ENCODE measurements at regions of chr4 and their contacts with region 1.

Region 1: GRCh38 chr4:46329118-46329976 is 60.6 kb downstream of the GABRA2 start:
- DNase-seq: peak; percentile 33
- H3K4me3 ChIP-seq: no peak overlapping the region
- H3K27ac ChIP-seq: no peak overlapping the region
- H3K4me1 ChIP-seq: no peaks in the 10 kb centered on the region
- H3K27me3 ChIP-seq: no peaks in the 10 kb centered on the region
- CTCF ChIP-seq: peak; percentile 42

Region 2: DNA sequence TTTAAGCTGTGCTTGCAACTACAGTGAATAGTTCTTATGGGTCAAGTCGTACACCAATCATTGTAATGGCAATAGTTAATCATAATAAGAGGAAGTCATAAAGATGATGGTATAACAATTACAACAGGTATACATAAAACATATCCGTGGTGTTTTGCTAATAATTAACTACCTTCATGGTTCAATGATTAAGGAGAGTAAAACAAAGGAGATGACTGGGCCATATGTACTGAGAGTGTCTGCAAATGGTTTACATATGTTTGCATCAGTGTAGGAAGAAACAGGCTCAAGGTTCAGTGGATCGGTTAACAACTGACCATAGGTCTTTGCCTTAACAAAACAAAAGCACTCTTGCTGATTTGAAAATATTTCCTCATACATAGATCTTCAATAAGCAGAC is 326.7 kb after region 1 on chr4:
- intact Hi-C with region 1: loop called (anchors 10 kb)
- DNase-seq: no peak
- H3K4me3 ChIP-seq: no peak overlapping the region
- H3K27ac ChIP-seq: no peak overlapping the region
- H3K4me1 ChIP-seq: no peaks in the 10 kb centered on the region
- H3K27me3 ChIP-seq: no peaks in the 10 kb centered on the region
- CTCF ChIP-seq: no peak